A549 (cell line): ENCODE measurements at regions of chr15 and their contacts with region 1.

Region 1: GRCh38 chr15:85330901-85331588 is 49.4 kb upstream of the AKAP13 start:
- DNase-seq: peak; percentile 93 to 95
- ATAC-seq: peak; percentile 92 to 96
- H3K4me3 ChIP-seq: peak overlapping the region; percentile 44; the same call in 2 of the 3 replicates
- H3K27ac ChIP-seq: peak overlapping the region; percentile 78 to 85
- H3K4me1 ChIP-seq: peaks cover 26% of the 10 kb centered on the region
- CTCF ChIP-seq: peak; percentile 98
- EP300 ChIP-seq: no peak
- POLR2A ChIP-seq: no peak
- RAD21 ChIP-seq: peak; percentile 99 to 100

Region 2: DNA sequence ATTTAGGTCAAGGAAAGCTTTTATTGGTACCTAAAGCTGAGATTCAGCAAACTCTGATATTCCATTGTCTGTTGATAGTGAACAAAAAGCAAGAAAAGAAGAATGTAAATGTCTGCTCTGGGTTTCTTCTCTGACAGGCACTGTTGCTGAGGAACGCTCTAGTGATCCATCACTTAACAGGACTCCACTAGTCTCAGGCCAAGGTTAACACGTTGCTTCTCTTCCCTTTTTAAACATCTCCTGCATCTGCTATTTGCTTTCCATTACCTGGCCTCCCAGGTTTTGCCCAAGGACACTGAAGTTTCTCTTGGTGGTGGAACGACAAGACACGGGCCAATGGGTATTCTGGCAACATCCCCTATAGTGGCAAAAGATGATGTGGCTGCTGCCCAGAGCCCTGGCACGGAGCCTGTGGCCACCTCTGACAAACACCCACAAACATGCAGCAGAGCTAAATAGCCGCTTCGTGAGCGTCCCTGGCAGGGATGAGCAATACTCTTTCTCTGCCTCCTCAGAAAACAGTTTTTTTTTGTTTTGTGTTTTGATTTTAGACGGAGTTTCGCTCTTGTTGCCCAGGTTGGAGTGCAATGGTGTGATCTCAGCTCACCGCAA is 48.4 kb before region 1 on chr15:
- CTCF ChIA-PET with region 1: no interaction called
- POLR2A ChIA-PET with region 1: no interaction called
- DNase-seq: no peak
- ATAC-seq: no peak
- H3K4me3 ChIP-seq: no peak overlapping the region
- H3K27ac ChIP-seq: no peak overlapping the region
- H3K4me1 ChIP-seq: no peaks in the 10 kb centered on the region
- CTCF ChIP-seq: no peak
- EP300 ChIP-seq: no peak
- POLR2A ChIP-seq: no peak
- RAD21 ChIP-seq: no peak

Region 3: GRCh38 chr15:85306946-85307708 is 23.9 kb before region 1 on chr15:
- CTCF ChIA-PET with region 1: interaction called, 18 read pairs
- POLR2A ChIA-PET with region 1: no interaction called
- DNase-seq: no peak
- ATAC-seq: no peak; a peak in 2 of 6 replicates
- H3K4me3 ChIP-seq: no peak overlapping the region
- H3K27ac ChIP-seq: no peak overlapping the region
- H3K4me1 ChIP-seq: no peaks in the 10 kb centered on the region
- CTCF ChIP-seq: no peak
- EP300 ChIP-seq: no peak
- POLR2A ChIP-seq: no peak
- RAD21 ChIP-seq: no peak

Region 4: GRCh38 chr15:85367741-85368140 is 36.7 kb after region 1 on chr15:
- CTCF ChIA-PET with region 1: interaction called, 20 read pairs
- POLR2A ChIA-PET with region 1: no interaction called
- DNase-seq: no peak
- ATAC-seq: no peak
- H3K4me3 ChIP-seq: no peak overlapping the region
- H3K27ac ChIP-seq: no peak overlapping the region
- H3K4me1 ChIP-seq: no peaks in the 10 kb centered on the region
- CTCF ChIP-seq: no peak
- EP300 ChIP-seq: no peak
- POLR2A ChIP-seq: no peak
- RAD21 ChIP-seq: no peak

Region 5: DNA sequence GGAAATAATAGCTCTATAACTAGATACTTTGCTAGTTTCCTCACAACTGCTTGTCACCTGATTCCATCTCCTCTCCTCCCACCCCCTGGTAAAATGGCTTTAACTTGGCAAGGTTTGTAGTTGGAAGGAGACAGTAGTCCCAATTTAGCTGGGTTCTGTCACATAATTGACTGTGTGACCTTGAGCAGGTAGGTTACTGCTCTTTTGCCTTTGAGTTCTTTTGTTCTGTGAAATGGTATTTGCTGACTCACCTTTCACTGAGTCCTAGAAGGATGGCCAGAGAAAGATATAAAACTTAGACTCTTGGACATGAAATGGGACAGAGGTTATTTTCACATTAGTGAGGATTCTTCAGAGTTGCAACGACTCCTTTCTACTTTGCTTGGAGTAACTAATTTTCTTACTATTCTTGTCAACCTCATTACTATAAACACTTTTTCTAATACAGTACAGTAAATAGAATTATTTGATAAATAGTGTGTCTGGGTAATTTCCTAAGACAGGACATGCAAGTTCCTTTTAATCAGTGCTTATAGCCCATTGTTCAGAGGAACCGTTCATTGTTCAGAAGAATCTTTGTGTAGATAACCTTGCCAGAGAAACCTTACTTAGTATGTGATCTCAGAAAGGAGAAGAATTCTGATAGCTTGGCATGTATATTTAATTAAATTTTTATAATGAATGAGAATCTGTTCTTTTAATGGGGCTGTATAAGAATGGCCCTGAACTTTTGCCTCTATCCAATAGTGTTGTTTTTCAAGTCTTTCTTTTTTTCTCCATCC is 63.7 kb after region 1 on chr15:
- CTCF ChIA-PET with region 1: interaction called, 14 read pairs
- POLR2A ChIA-PET with region 1: no interaction called
- DNase-seq: no peak
- ATAC-seq: peak in 1 of 2 experiments; percentile 58; a peak in 3 of 6 replicates
- H3K4me3 ChIP-seq: no peak overlapping the region
- H3K27ac ChIP-seq: peak overlapping the region; percentile 23 to 72; a peak in 5 of 6 replicates
- H3K4me1 ChIP-seq: peaks cover 37% of the 10 kb centered on the region
- CTCF ChIP-seq: no peak
- EP300 ChIP-seq: no peak
- POLR2A ChIP-seq: no peak
- RAD21 ChIP-seq: no peak

Region 6: DNA sequence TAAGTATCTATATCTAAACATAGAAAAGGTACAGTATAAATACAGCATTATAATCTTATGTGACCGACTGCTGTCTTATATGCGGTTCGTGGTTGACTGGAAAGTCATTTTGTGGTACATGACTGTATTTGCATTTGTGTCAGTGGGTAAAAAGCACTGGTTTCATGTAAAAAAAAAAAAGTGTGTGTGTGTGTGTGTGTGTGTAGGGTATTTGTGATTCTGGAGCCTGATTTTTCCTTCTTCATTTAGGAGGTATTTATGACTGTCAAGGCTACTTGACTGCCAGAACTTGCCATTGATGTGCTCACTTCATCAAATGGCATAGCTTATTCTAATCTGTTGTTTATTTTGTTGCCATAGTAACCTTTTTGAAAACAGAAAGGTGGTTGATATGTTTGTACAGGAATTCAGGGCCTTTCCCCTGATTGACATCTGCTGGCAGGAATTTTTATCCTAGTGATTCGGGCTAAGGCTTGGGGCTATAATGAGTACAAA is 112.6 kb after region 1 on chr15:
- CTCF ChIA-PET with region 1: interaction called, 13 read pairs
- POLR2A ChIA-PET with region 1: no interaction called
- DNase-seq: peak; percentile 49 to 82
- ATAC-seq: peak; percentile 77 to 92
- H3K4me3 ChIP-seq: no peak overlapping the region
- H3K27ac ChIP-seq: no peak overlapping the region
- H3K4me1 ChIP-seq: peaks cover 39% of the 10 kb centered on the region
- CTCF ChIP-seq: no peak
- EP300 ChIP-seq: no peak
- POLR2A ChIP-seq: no peak
- RAD21 ChIP-seq: peak in 1 of 2 experiments; percentile 24; a peak in 1 of 5 replicates

Region 7: DNA sequence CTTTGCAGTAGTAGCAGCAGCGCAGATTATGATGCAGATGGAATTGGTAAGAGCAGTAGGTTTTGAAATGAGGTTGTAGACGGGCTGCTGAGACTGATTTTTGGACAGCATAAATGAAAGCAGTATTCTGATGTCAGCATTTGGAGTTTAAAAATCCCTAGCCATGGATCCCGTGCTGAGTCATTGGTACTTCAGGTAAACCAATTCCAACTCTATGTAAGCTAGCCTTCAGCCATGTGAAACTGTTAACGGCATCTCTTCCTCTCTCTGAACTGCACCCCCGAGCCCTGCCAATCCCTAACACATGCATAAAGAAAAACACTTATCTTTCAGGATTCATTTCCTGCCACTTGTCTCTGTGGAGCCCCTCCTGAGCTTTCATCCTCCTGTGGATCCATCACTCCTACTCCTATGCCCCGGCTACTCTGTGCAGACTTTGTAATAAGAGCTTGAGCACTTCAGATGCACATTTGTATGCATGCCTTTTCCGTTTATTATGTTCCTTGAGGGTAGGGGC is 168.4 kb after region 1 on chr15:
- CTCF ChIA-PET with region 1: interaction called, 56 read pairs
- POLR2A ChIA-PET with region 1: no interaction called
- DNase-seq: no peak
- ATAC-seq: no peak; a peak in 1 of 6 replicates
- H3K4me3 ChIP-seq: no peak overlapping the region
- H3K27ac ChIP-seq: peak overlapping the region in 1 of 2 experiments; percentile 23; a peak in 2 of 6 replicates
- H3K4me1 ChIP-seq: peaks cover 55% of the 10 kb centered on the region
- CTCF ChIP-seq: no peak
- EP300 ChIP-seq: no peak
- POLR2A ChIP-seq: no peak
- RAD21 ChIP-seq: no peak